ENCODE measurements at regions of chr11 and their contacts with region 1.

Region 1: GRCh38 chr11:38315141-38315540 is 1717.1 kb upstream of the RAG2 start:
- DNase-seq: no peak
- ATAC-seq: no peak
- H3K4me3 ChIP-seq: no peak overlapping the region
- H3K27ac ChIP-seq: no peak overlapping the region
- H3K4me1 ChIP-seq: no peaks in the 10 kb centered on the region
- H3K27me3 ChIP-seq: no peaks in the 10 kb centered on the region
- CTCF ChIP-seq: no peak

Region 2: DNA sequence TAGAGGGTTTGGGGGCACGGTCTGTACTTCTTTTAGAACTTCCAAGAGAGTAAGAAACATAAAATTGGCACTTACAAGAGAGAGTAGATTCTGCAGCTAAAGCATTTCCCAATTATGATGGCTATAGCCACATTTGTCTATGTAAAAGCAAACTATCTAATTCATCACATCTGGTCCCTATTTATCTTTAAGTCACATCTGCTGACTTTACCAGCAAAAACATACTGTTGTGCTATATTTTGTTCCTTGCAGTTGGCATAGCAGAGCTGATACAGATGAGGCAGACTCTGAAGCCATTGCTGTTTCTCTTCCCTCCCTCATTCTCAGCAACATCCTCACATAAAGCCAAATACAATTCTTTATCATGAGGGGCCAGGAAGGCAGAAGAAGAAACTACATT is 183.6 kb before region 1 on chr11:
- CTCF ChIA-PET with region 1: no interaction called
- POLR2A ChIA-PET with region 1: no interaction called
- in situ Hi-C with region 1: no loop called
- intact Hi-C with region 1: no loop called
- DNase-seq: no peak
- ATAC-seq: no peak
- H3K4me3 ChIP-seq: no peak overlapping the region
- H3K27ac ChIP-seq: no peak overlapping the region
- H3K4me1 ChIP-seq: no peaks in the 10 kb centered on the region
- H3K27me3 ChIP-seq: no peaks in the 10 kb centered on the region
- CTCF ChIP-seq: no peak

Region 3: DNA sequence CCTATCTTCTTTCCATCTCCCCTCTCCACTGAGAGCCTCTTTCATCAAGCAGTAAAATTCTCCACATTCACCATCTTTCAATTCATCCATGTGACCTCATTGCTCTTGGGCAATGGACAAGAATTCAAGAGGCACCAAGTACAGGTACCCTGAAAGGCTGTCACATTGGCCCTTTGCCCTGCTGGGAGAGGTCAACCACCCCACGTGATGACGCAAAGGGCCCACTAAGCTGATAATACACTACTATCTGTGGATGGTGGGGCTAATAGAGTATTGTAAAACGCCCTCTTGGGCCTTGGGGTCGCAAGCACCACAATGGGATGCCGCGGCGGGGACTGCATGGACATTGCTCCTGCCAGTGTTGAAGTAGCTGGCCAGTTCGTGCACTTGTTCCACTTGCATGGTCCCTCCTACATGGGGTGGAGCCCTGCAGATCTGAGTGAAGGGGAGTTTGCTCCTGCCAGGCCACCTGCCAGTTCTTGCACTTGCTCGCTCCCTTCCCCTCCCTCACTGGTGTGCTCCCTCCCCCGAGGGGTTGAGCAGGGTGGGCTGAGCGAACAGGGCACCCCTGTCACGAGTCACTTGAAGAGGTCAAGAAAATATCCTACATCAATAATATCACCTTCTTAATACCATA is 138.3 kb before region 1 on chr11:
- CTCF ChIA-PET with region 1: no interaction called
- POLR2A ChIA-PET with region 1: no interaction called
- in situ Hi-C with region 1: no loop called
- intact Hi-C with region 1: no loop called
- DNase-seq: no peak
- ATAC-seq: no peak
- H3K4me3 ChIP-seq: no peak overlapping the region
- H3K27ac ChIP-seq: no peak overlapping the region
- H3K4me1 ChIP-seq: no peaks in the 10 kb centered on the region
- H3K27me3 ChIP-seq: no peaks in the 10 kb centered on the region
- CTCF ChIP-seq: no peak

Region 4: DNA sequence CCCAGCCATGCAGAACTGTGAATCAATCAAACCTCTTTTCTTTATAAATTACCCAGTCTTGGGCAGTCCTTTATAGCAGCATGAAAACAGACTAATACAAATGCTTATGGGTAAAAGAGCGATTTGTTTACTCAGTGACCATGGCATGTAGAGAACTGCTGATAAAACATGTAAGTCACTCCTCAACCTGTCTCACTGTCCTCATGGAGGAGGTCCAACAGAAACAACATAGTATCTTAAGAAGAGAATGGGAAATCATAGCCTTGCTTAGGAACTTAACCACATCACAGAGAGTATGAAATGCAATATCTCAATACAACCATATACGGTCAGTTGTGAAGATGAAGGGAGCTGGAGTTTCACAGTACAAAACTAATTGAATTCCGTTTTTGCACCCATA is 16.9 kb after region 1 on chr11:
- CTCF ChIA-PET with region 1: no interaction called
- POLR2A ChIA-PET with region 1: no interaction called
- in situ Hi-C with region 1: no loop called
- intact Hi-C with region 1: no loop called
- DNase-seq: no peak
- ATAC-seq: no peak
- H3K4me3 ChIP-seq: no peak overlapping the region
- H3K27ac ChIP-seq: no peak overlapping the region
- H3K4me1 ChIP-seq: no peaks in the 10 kb centered on the region
- H3K27me3 ChIP-seq: no peaks in the 10 kb centered on the region
- CTCF ChIP-seq: no peak

Region 5: DNA sequence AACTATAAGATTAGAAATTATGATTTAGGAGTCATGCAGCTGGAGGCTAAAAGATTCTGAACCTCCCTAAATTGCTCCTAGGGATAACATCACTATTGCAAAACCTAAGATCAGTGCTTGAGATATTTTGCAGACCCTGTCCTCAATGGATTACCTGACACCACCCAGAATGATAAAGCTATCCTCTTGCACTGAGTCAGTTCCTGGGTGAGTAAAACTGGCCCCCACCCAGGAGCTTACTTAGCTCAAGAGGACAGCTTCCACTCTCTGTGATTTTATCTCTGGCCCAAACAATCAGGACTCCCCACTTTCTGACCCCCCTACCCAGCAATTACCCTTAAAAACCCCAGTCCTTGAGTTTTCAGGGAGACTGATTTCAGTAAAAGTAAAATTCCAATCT is 357.3 kb after region 1 on chr11:
- CTCF ChIA-PET with region 1: no interaction called
- POLR2A ChIA-PET with region 1: no interaction called
- in situ Hi-C with region 1: no loop called
- intact Hi-C with region 1: loop called (anchors 10 kb)
- DNase-seq: no peak
- ATAC-seq: no peak
- H3K4me3 ChIP-seq: no peak overlapping the region
- H3K27ac ChIP-seq: no peak overlapping the region
- H3K4me1 ChIP-seq: no peaks in the 10 kb centered on the region
- H3K27me3 ChIP-seq: no peaks in the 10 kb centered on the region
- CTCF ChIP-seq: no peak

Measured in Panc1 (cell line).